Posterior vena cava (tissue), 2 donors: ENCODE measurements at regions of chr4 and their contacts with region 1.

Region 1: DNA sequence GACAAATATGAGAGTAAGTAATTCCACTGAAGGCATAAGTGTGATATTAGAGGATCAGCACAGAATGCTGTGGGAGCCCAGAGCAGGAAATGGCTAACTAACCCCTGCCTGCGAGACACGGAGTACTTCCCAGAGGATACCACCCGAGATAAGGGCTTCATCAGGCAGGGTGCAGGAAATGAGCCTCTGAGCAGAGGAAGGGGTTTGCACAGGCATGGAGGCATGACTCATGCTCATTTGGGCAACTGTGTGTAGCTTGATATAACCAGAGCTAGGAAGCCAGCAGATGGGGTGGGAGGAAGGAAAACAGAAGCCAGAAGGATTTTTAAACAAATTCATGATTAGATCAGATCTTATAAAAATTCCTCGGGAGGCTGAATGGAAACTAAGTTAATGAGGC is 70.0 kb upstream of the TSPAN5 start:
- DNase-seq: no peak

Region 2: DNA sequence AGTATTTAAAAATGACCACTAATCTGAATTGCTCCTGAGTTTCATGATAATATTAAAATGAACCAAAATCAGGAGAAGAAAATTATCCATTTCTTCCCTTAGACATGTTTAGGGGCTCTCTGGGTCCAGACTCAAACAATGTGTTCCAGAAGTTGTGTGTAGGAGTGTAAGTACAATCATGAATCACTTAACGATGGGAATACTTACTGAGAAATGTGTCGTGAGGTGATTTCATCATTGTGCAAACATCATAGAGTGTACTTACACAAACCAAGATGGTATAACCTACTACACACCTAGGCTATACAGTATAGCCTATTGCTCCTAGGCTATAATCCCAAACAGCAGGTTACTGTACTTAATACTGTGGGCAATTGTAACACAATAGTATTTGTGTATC is 659.9 kb before region 1 on chr4:
- intact Hi-C with region 1: loop called in 1 of 2 experiments (anchors 10 kb)
- DNase-seq: no peak

Region 3: DNA sequence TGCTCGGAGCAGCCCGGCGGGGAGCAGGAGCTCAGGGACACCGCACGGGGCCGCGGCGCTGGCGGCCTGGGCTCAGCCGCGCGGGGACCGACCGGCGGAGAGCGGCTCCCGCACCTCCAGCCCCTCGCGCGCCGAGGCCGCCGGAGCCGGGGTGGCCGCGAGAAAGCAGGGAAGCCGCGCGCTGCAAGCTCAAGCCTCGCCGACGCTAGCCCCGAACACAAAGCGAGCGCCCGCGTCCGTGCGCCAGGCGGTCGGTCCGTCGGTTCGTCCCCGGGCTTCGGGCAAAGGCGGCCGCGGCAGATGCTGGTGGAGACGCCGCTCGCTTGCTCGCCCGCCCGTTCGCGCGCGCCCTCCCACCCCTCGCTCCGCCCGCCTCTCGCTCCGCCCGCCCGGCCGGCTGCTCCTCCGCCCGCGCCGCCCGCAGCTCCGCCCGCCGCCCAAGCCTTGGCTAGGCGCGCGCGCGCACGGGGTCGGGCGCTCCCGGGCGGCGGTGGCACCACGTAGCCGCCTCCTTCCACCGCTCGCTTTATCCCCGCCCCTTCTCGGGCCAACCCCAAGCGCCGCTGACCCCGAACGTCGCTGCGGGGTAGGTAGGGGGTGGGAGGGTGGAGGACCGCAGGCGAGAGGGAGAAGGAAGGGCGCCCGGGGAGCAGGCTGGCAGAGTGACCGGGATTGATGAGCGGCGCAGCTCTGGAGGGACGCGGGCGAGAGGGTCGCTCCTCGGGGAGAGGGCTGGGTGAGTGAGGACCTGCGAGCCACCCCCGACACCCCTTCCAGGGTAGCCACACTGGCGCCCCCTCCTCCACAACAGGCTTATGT is 69.9 kb before region 1 on chr4 and contains the start of gene TSPAN5:
- intact Hi-C with region 1: no loop called
- DNase-seq: peak; percentile 89
- total RNA-seq, gene TSPAN5: 3.5 to 5.3 TPM

Region 4: GRCh38 chr4:99100876-99101275 is 372.4 kb after region 1 on chr4:
- intact Hi-C with region 1: no loop called
- DNase-seq: no peak